Posterior vena cava (tissue), 2 donors: ENCODE measurements at regions of chr6 and their contacts with region 1.

Region 1: GRCh38 chr6:70398783-70399728 is 14.3 kb upstream of the FAM135A start:
- DNase-seq: no peak

Region 2: DNA sequence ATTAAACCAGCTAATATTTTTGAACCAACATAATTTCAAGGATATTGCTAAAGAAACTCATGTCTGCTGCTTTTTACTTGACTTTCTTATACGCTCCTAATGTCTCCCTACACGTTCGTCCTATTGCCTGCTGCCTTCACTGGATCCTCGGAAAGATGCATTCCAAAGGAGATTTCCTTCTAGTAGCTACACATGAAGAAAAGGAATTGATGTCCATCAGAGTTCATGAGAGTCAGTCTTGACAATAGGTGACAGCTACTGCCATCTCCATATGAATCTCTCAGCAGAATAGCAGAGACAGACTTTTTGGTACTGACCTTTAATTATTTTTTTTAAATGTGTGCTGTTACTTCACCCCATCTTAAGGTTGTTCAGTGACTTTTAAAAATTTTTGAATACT is 72.0 kb before region 1 on chr6:
- intact Hi-C with region 1: loop called in 1 of 2 experiments (anchors 2 kb)
- DNase-seq: no peak

Region 3: GRCh38 chr6:70507161-70507560 is 108.1 kb after region 1 on chr6:
- intact Hi-C with region 1: no loop called
- DNase-seq: no peak

Region 4: DNA sequence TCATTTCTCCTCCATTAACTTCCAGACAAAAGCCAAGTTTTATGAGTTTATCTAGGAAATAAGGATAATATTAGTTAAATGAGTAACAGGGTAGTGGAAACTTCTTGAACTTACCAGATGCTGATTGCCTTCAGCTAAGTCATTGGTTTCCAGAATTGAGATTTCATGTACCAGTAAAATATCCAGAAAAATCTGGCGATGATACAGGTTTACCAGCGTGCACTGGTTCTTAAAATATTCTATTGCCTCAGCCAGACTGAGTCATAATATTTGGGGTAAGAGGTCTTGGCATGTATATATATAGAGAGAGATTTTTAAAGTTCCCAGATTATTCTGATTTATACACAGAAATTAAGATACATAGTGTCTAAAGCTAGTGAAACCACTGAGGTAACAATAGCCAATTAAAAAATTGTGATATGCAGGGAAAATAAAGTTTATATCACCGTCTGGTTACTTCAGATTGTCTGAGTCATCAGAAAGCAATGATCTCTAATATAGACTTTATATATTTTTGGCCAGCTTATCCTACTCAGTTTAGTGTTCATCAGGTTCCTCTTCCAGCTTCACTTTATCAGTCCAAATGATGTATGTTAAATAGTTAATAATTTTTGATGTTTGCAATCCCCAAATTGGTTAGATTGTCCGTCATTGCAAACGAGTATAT is 128.1 kb after region 1 on chr6:
- intact Hi-C with region 1: no loop called
- DNase-seq: no peak